Ascending aorta (tissue), 2 donors: ENCODE measurements at regions of chr1 and their contacts with region 1.

Region 1: DNA sequence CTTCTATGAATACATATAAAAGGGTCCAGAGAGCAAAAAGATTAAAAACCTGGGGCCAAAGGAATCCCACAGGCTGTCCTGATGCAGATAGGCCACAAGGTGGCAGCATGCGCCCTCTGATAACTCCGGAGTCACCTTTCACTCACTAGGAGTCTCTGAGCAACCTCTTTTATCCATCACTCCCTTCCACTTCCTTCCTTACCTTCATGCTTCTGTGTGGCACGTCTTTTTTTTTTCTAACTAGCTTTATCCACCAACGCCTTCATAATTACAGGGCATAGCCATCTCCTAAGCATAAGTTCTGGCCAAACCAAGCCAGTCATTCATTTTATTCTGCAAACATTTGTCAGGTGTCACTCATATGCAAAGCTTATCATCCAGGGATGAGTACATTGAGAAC is 3.9 kb upstream of the PGLYRP4 start:
- DNase-seq: peak in 1 of 2 donors; percentile 80
- H3K4me3 ChIP-seq: no peak overlapping the region
- H3K27ac ChIP-seq: no peak overlapping the region
- H3K4me1 ChIP-seq: no peaks in the 10 kb centered on the region
- H3K27me3 ChIP-seq: no peaks in the 10 kb centered on the region
- CTCF ChIP-seq: peak; percentile 82 to 92 (median 84)

Region 2: GRCh38 chr1:153617675-153618074 is 265.2 kb after region 1 on chr1:
- intact Hi-C with region 1: loop called (anchors 10 kb)
- DNase-seq: peak in 1 of 2 donors; percentile 92
- H3K4me3 ChIP-seq: no peak overlapping the region
- H3K27ac ChIP-seq: peak overlapping the region in 1 of 2 donors; percentile 49
- H3K4me1 ChIP-seq: peaks cover 0 to 12% of the 10 kb centered on the region in 2 donors
- H3K27me3 ChIP-seq: no peaks in the 10 kb centered on the region
- CTCF ChIP-seq: peak; percentile 58 to 73 (median 58)